Astrocyte of the cerebellum (primary cell): ENCODE measurements at regions of chr3 and their contacts with region 1.

Region 1: GRCh38 chr3:27590437-27591298 is 106.5 kb upstream of the SLC4A7 start:
- DNase-seq: no peak
- H3K4me3 ChIP-seq: no peak overlapping the region
- CTCF ChIP-seq: no peak

Region 2: DNA sequence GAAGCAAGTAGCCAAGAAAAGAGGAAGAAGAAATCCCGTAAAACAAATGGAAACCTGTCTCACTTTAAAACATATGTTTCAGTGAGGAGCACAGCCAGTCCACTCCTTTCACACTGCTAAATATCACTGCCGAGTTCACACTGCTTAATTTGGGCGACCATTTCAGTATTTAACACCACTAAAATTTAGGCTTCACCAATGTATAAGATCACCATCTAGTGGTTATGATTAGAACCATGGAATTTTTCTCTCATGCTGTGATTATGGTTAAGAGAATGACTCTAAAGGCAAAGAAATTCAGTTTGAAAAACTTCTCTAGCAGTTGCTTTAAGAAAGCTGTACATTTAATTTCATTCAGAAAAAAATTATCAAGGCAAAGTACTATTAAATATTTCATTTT is 123.1 kb before region 1 on chr3:
- in situ Hi-C with region 1: loop called (anchors 5 kb)
- DNase-seq: no peak
- H3K4me3 ChIP-seq: no peak overlapping the region
- CTCF ChIP-seq: peak; percentile 42